ENCODE measurements at regions of chr1 and their contacts with region 1.

Region 1: DNA sequence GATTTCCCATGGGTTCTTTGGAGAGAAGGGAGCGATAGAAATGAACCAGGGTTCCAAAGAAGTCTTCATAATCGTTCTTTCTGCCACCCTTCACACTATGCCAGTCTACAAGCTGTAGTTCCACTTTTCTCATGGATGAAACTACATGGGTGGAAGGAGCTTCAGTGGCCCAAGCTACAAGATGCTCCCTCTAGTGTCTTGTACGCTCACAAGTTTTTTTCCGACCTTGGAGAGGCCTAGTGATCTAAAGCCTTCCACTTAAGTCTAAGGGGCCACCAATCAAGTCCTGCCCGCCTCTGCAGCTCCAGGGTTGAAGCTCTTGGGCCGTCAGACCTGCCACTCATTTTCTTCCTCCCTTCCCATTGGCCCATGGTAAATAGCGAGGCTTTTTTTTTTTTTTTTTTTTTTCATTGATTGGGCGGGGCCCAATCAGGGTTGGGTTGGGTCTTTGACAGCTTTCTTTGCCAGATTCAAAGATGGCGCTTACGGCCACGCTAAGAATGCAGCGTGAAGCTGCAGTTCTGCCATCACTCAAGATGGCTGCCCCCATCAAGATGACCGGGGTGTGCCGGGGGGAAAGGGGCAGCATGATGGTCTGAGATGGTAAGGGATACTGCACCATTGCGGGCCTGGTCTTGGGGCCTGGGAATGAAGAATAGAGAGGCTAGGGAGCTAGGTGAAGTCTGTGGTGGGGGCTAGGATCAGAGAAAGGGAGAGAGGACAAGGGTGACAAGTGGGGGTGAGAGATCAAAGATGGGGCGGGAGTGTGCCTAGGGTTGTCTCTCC is at the start of gene TOMM40L:
- DNase-seq: peak; percentile 93
- ATAC-seq: peak; percentile 95
- total RNA-seq, gene TOMM40L: 36.9 TPM

Region 2: DNA sequence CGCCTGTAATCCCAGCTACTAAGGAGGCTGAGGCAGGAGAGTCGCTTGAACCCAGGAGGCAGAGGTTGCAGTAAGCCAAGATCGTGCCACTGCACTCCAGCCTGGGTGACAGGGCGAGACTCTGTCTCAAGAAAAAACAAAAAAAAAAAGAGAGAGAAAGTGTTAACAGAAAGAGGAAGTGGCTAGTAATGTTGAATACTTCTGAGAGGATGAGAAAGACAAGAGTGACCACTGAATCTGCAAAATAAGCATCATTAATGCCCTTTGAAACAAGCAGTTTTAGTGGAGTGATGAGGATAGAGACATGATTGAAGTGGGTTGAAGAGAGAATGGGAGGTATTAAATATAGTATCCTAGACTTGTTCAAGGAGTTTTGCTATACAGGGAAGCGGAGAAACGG is 72.4 kb after region 1 on chr1:
- intact Hi-C with region 1: loop called (anchors 5 kb)
- DNase-seq: no peak
- ATAC-seq: no peak

Region 3: DNA sequence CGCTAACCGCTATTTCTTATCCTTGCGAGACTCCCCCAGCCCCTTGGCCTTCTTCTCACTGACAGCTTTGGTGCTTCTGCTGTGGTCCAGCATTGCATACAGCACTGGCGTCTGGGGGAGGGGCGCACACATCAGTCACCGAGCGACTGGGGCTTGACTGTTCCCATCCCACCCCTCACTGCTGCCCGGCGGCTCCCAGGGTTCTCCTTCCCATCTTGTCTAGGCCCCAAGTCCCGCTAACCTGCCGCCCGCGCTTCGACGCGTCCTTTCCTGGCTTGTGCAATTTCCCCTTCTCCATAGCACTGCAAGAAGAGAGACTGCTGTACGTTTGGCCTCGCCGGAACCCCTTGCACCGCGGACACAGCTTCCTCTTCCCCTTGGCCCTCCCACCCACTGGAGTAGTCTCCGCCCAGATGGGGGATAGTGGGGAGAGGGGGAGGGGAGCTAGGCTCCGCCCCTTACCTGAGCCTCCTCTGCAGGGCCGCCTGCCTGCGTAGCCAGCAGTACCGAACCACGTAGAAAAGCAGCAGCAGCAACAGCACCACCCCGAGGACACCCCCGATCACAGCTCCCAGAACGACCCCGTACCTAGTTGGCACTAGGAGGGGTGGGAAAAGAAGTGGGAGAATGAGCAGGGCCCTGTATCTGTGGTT is 80.3 kb after region 1 on chr1:
- intact Hi-C with region 1: loop called (anchors 5 kb)
- DNase-seq: peak; percentile 90
- ATAC-seq: peak; percentile 94

Region 4: DNA sequence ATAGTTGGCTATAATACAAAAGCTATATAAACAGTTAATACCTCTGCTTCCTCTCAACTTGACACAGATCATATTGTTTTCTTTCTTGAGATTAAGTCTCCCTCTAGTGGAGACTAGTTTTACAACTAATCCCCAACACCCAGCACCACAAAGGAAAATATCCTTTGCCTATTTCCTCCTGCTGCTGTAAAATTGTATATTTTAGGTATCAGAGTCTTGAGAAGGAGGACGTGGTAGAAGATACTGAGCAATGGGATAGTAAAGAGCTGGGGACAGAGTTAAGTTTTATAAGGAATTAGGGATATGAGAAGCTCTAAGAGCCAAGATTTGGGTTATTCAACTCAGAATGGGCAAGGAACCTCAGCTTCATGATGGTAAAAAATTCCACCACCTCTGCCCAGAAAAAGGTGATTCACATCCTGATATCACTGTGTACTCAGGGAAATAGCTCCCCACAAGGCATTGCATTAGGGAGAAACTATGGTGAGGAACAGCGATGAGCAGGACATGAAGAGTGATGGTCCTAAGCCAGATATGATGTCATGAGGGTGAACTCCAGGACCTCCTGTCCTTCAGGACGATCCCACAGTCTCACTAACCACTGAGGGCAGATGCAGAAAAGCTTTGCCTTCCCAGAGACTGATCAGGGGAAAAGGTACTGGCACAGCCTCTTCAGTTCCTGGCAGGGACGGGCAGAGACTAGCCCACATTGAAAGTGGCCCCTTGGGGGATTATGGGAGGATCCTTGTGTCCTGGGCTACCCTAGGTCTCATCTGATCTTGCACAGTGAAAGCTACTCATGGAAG is 156.7 kb after region 1 on chr1:
- intact Hi-C with region 1: loop called (anchors 5 kb)
- DNase-seq: no peak
- ATAC-seq: peak; percentile 89